Caco-2 (cell line): ENCODE measurements at regions of chrX and their contacts with region 1.

Region 1: DNA sequence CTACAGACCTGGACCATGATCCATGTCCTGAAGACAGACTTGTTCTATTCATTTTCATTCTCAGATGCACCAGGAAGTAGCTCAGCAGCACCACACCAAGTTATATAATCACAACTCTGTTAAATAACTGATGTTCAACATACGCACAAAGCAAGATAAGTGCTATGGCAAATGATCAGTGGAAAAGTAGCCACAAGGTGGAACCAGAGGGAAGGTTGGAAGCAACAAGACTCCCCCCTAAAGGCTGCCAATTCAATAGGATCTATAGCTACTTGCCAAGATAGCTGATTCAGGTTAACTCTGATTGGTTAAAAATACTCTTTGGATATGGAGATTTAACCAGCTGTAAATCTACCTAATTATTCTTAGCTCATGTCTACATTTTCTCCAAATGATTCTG is 23.7 kb upstream of the FAM47B start:
- DNase-seq: peak; percentile 38 to 53
- H3K4me3 ChIP-seq: no peak overlapping the region
- H3K4me3 Mint-ChIP-seq: no peak overlapping the region
- H3K27ac Mint-ChIP-seq: no peak overlapping the region
- H3K4me1 ChIP-seq: 0 out of 2 replicates have a peak, but pooled peaks cover 11% of the 10 kb centered on the region
- H3K4me1 Mint-ChIP-seq: peaks cover 6% of the 10 kb centered on the region
- H3K27me3 ChIP-seq: no peaks in the 10 kb centered on the region
- H3K27me3 Mint-ChIP-seq: no peaks in the 10 kb centered on the region
- CTCF ChIP-seq: peak in 1 of 2 experiments; percentile 50

Region 2: DNA sequence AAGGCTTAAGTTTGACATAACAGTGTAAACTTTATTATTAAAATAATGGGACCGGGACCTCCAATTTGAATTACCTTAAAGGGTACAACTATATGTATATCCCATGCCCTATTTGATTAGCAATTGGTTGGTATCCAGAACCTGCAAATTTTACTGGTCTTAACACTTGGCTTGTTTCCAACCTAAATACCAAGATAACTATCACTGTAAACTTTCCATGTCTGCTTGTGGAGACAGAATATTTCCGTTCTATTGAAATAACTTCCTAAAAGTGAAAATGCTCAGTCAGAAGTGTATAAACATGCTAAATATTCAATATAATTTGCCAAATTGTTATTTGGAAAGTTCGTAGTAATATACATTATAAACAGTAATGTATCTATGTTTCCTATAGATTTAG is 415.7 kb before region 1 on chrX:
- CTCF ChIA-PET with region 1: no interaction called
- POLR2A ChIA-PET with region 1: no interaction called
- intact Hi-C with region 1: no loop called
- DNase-seq: no peak
- H3K4me3 ChIP-seq: no peak overlapping the region
- H3K4me3 Mint-ChIP-seq: no peak overlapping the region
- H3K27ac Mint-ChIP-seq: no peak overlapping the region
- H3K4me1 ChIP-seq: no peaks in the 10 kb centered on the region
- H3K4me1 Mint-ChIP-seq: no peaks in the 10 kb centered on the region
- H3K27me3 ChIP-seq: no peaks in the 10 kb centered on the region
- H3K27me3 Mint-ChIP-seq: no peaks in the 10 kb centered on the region
- CTCF ChIP-seq: no peak

Region 3: DNA sequence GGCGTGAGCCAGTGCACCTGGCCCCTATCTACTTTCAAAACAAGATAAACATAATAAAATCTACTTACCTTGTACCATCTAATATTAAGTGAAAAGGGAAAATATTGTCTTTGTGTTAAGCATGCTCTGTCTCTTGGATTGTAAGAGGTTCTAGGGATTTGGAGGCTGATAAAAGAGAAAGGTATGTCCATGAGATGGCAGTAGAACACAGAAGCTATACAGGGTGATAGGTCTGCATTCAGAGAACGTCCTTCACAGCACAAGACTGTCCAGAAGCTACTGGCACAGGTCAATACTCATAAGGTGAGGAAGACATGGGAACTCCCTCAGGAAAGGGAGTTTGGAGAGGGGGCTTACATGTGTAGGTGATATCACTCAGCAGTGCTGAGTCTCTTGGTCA is 397.3 kb before region 1 on chrX:
- CTCF ChIA-PET with region 1: no interaction called
- POLR2A ChIA-PET with region 1: no interaction called
- intact Hi-C with region 1: loop called (anchors 5 kb)
- DNase-seq: peak in 1 of 2 experiments; percentile 0
- H3K4me3 ChIP-seq: no peak overlapping the region
- H3K4me3 Mint-ChIP-seq: no peak overlapping the region
- H3K27ac Mint-ChIP-seq: no peak overlapping the region
- H3K4me1 ChIP-seq: no peaks in the 10 kb centered on the region
- H3K4me1 Mint-ChIP-seq: no peaks in the 10 kb centered on the region
- H3K27me3 ChIP-seq: no peaks in the 10 kb centered on the region
- H3K27me3 Mint-ChIP-seq: no peaks in the 10 kb centered on the region
- CTCF ChIP-seq: peak in 1 of 2 experiments; percentile 28

Region 4: GRCh38 chrX:34638116-34638515 is 280.7 kb before region 1 on chrX:
- CTCF ChIA-PET with region 1: interaction called, 5 read pairs
- POLR2A ChIA-PET with region 1: no interaction called
- intact Hi-C with region 1: loop called (anchors 5 kb)
- DNase-seq: peak in 1 of 2 experiments; percentile 34
- H3K4me3 ChIP-seq: no peak overlapping the region
- H3K4me3 Mint-ChIP-seq: no peak overlapping the region
- H3K27ac Mint-ChIP-seq: no peak overlapping the region
- H3K4me1 ChIP-seq: no peaks in the 10 kb centered on the region
- H3K4me1 Mint-ChIP-seq: no peaks in the 10 kb centered on the region
- H3K27me3 ChIP-seq: no peaks in the 10 kb centered on the region
- H3K27me3 Mint-ChIP-seq: no peaks in the 10 kb centered on the region
- CTCF ChIP-seq: peak; percentile 34 to 35

Region 5: GRCh38 chrX:34943235-34943634 is 24.4 kb after region 1 on chrX:
- CTCF ChIA-PET with region 1: no interaction called
- POLR2A ChIA-PET with region 1: no interaction called
- intact Hi-C with region 1: no loop called
- DNase-seq: no peak
- H3K4me3 ChIP-seq: no peak overlapping the region
- H3K4me3 Mint-ChIP-seq: no peak overlapping the region
- H3K27ac Mint-ChIP-seq: no peak overlapping the region
- H3K4me1 ChIP-seq: no peaks in the 10 kb centered on the region
- H3K4me1 Mint-ChIP-seq: no peaks in the 10 kb centered on the region
- H3K27me3 ChIP-seq: no peaks in the 10 kb centered on the region
- H3K27me3 Mint-ChIP-seq: no peaks in the 10 kb centered on the region
- CTCF ChIP-seq: no peak

Region 6: GRCh38 chrX:34987646-34988045 is 68.8 kb after region 1 on chrX:
- CTCF ChIA-PET with region 1: no interaction called
- POLR2A ChIA-PET with region 1: no interaction called
- intact Hi-C with region 1: loop called (anchors 1 kb)
- DNase-seq: peak; percentile 42 to 57
- H3K4me3 ChIP-seq: no peak overlapping the region
- H3K4me3 Mint-ChIP-seq: no peak overlapping the region
- H3K27ac Mint-ChIP-seq: no peak overlapping the region
- H3K4me1 ChIP-seq: peaks cover 19% of the 10 kb centered on the region
- H3K4me1 Mint-ChIP-seq: no peaks in the 10 kb centered on the region
- H3K27me3 ChIP-seq: no peaks in the 10 kb centered on the region
- H3K27me3 Mint-ChIP-seq: no peaks in the 10 kb centered on the region
- CTCF ChIP-seq: no peak

Region 7: DNA sequence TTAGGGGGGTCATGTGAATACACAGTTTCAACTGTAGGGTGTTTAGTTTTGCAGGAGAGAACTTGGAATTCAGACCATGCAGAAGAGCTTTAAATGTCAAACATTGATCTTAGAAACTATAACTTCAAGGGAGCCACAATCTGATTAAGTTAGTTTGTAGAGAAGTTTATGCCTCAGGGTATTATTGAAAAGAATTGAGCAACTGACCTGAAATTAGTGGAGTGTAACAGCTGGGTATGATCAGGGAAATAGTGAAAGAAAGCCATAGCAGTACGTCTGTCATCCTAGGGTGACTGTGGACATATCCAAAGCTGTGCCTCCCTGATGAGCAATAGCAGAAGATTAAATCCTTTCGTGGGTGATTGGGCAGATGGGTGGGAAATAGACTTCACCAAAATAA is 87.5 kb after region 1 on chrX:
- CTCF ChIA-PET with region 1: no interaction called
- POLR2A ChIA-PET with region 1: no interaction called
- intact Hi-C with region 1: no loop called
- DNase-seq: no peak
- H3K4me3 ChIP-seq: no peak overlapping the region
- H3K4me3 Mint-ChIP-seq: no peak overlapping the region
- H3K27ac Mint-ChIP-seq: no peak overlapping the region
- H3K4me1 ChIP-seq: no peaks in the 10 kb centered on the region
- H3K4me1 Mint-ChIP-seq: no peaks in the 10 kb centered on the region
- H3K27me3 ChIP-seq: no peaks in the 10 kb centered on the region
- H3K27me3 Mint-ChIP-seq: no peaks in the 10 kb centered on the region
- CTCF ChIP-seq: no peak

Region 8: DNA sequence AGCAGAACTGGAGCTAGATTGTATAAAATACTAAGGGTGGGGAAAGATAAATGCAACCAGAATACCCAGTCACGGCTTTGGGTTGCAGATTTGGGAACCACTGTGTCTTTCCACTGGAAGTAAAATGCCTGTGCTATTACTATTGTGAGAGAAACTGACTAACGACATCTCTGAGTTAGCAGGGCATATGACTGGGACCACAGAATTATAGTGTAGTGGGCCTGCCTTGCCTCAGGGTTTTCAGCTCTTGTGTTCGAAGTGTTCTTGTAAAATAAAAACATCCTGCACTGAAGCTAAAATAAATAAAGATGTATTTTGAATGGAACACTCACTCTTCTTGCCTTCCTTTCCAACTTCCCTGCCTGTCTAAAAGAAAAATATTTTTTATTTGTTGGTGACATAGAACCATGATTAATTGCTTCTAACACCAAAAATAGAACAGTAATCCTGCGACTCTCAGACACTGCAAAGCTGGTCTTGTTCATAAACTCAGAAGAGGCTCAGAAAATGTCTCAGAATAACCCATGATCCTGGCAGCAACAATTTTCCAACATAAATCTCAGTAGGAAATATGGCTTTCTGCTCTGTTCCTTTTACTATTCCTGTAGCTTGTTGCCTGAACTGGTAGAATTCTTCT is 127.9 kb after region 1 on chrX:
- CTCF ChIA-PET with region 1: no interaction called
- POLR2A ChIA-PET with region 1: no interaction called
- intact Hi-C with region 1: no loop called
- DNase-seq: no peak
- H3K4me3 ChIP-seq: no peak overlapping the region
- H3K4me3 Mint-ChIP-seq: no peak overlapping the region
- H3K27ac Mint-ChIP-seq: no peak overlapping the region
- H3K4me1 ChIP-seq: no peaks in the 10 kb centered on the region
- H3K4me1 Mint-ChIP-seq: no peaks in the 10 kb centered on the region
- H3K27me3 ChIP-seq: no peaks in the 10 kb centered on the region
- H3K27me3 Mint-ChIP-seq: no peaks in the 10 kb centered on the region
- CTCF ChIP-seq: no peak

Region 9: GRCh38 chrX:35076061-35076460 is 157.2 kb after region 1 on chrX:
- CTCF ChIA-PET with region 1: no interaction called
- POLR2A ChIA-PET with region 1: no interaction called
- intact Hi-C with region 1: loop called (anchors 5 kb)
- DNase-seq: peak in 1 of 2 experiments; percentile 0
- H3K4me3 ChIP-seq: no peak overlapping the region
- H3K4me3 Mint-ChIP-seq: no peak overlapping the region
- H3K27ac Mint-ChIP-seq: no peak overlapping the region
- H3K4me1 ChIP-seq: no peaks in the 10 kb centered on the region
- H3K4me1 Mint-ChIP-seq: no peaks in the 10 kb centered on the region
- H3K27me3 ChIP-seq: no peaks in the 10 kb centered on the region
- H3K27me3 Mint-ChIP-seq: no peaks in the 10 kb centered on the region
- CTCF ChIP-seq: no peak

Region 10: DNA sequence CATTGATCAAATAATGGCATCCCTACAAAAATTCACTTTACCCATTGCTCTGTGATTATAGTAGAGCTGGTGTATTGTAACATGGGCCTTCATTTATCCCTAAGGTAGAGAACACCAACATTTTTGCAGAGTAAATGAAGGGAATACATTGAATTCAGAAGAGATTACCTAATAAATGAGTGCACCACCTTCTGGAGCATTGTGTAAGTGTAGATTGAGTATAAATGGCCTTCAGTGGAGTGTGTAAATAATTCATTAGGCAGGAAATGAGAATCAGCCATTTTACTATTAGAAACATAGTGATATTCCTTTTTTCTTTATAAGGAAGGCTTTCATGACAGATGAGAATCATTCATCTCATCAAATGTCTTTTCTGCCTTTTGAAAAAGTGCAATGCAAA is 179.6 kb after region 1 on chrX:
- CTCF ChIA-PET with region 1: no interaction called
- POLR2A ChIA-PET with region 1: no interaction called
- intact Hi-C with region 1: loop called (anchors 1 kb)
- DNase-seq: no peak
- H3K4me3 ChIP-seq: no peak overlapping the region
- H3K4me3 Mint-ChIP-seq: no peak overlapping the region
- H3K27ac Mint-ChIP-seq: no peak overlapping the region
- H3K4me1 ChIP-seq: no peaks in the 10 kb centered on the region
- H3K4me1 Mint-ChIP-seq: no peaks in the 10 kb centered on the region
- H3K27me3 ChIP-seq: no peaks in the 10 kb centered on the region
- H3K27me3 Mint-ChIP-seq: no peaks in the 10 kb centered on the region
- CTCF ChIP-seq: no peak